Right ventricle myocardium inferior (tissue), 1 donor: ENCODE measurements at regions of chr2 and their contacts with region 1.

Region 1: DNA sequence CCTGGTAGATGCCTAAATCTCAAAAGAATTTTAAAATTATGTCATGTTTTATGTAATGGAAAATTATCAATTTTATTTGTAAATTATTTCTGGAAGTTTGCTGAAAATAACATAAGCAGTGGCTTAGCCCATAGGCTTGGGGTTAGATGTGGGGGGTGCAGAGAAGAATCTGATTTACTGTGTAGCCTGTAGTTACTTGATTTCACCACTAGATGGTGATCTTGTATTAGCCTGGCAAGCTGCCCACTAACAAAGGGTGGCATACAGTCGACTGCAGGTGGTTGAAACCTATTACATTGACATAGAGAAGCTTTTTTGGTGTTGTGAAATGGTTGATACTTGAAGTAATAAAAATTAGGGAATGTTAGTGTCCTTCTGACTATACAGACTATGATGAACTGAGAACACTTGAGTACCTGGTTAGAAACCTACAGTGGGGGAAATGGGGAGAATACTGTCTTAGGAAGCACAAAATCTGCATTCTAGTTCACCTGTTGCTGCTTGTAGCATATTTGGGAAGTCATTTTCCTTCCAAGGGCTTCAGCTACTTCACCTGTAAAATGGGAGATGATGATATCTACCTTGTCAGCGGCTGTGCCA is 191.0 kb upstream of the LHCGR start:
- DNase-seq: no peak
- ATAC-seq: peak; percentile 77

Region 2: GRCh38 chr2:48574353-48575287 is 371.9 kb before region 1 on chr2:
- intact Hi-C with region 1: no loop called
- DNase-seq: no peak
- ATAC-seq: no peak

Region 3: DNA sequence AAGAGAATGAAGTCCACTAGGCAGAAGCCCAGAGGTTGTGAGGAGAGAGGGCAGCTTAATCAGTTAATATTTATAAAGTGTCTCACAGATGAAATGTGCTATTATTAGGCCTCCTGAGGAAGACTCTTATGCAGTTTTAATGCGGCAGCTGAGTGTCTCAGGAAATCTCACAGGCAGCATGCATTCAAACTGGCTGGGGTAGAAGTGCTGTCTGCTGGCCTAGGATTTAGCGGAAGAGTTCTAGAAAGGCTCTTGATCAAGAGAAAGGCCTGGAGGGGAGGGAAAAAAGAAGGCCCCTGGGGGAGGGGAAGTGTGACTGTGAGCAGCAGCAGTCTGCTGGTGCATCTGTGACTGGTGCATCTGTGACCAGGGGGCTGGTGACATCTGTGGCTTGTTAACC is 74.7 kb after region 1 on chr2:
- intact Hi-C with region 1: loop called (anchors 5 kb)
- DNase-seq: no peak
- ATAC-seq: peak; percentile 60

Region 4: DNA sequence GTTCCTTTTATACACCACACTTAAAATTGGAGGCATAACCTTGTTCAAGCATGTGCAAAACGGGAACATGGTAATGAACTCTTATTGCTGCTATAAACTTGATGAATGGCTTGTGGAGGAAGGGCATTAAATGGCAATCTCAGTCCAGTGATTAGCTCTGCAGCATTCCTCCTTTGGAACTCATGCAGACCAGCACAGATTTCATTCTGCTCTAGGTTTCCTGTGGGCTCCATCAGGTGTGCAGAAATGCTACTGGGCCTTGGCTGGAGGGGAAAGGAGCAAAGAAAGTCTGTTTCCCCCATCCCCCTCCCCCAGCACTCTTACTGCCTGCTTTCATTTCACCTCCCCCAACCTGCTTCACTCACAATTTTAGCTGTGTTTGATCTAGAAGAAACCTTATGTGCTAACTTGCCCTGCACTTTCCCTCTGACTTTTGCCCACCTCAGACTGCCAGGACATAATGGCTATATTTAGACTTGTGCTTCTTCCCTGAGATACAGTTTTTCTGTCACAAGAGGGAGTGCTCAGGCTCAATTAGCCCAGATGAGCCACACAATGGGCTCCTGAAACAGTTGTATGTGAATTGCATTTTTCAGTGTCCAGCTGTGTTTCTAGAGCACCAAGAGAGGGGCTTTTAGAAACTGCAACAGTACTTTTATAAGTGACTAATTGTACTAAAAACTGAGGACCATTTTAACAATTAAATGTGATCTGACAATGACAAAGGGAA is 98.0 kb after region 1 on chr2:
- intact Hi-C with region 1: loop called (anchors 10 kb)
- DNase-seq: no peak
- ATAC-seq: peak; percentile 81

Region 5: DNA sequence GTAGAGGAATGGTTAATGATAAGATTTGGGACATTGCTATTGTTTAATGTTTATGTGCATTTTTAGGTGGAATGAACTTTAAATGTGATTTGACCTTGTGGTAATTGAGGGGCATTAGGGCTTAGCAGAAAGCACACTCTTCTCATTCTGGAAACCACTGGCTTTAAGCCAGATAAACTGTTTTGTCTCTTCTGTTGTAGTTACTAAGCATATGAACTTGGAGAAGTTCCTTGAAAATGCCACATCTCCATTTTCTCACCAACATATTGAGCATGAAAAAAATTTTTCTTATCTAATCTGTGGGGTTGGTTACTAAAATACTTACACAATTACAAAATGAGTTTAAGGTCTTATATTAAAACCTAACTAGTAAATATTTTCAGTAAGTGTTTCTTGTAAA is 278.6 kb after region 1 on chr2:
- intact Hi-C with region 1: loop called (anchors 10 kb)
- DNase-seq: no peak
- ATAC-seq: peak; percentile 47

Region 6: GRCh38 chr2:49332415-49332814 is 385.9 kb after region 1 on chr2:
- intact Hi-C with region 1: loop called (anchors 5 kb)
- DNase-seq: no peak
- ATAC-seq: no peak

Region 7: DNA sequence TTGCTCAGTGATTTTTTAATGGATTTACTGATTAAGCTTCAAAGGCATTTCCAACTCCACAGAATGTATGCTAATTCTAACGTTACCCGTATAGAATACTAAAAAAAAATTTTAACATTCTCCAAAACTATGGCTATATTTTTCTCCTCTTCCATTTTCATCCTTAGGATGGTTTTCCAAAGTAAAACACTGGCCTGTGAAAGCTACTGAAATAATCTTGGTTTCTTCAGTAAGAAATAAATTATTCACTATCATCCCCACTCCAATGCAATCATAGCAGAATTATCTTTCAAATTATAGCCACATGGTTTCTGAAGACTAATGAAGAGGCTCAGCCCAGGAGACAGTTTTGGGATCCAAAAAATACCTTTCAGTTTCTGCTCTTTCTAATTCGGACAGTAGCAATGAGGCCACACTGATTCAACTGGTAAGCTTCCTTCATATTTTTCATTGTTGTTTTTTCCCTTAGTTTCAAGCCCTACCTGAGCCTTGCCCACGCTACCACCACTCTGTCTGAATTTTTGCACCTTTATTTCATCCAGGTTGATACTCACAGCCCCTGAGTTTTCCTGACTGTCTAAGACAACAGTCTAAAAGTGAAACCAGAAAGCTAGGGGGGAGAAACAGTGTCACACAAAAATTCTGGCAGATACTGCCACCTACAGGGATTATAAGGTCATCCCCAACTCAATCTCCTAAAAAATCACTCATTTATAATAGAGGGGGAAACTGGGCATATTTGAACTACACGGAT is 1197.5 kb after region 1 on chr2:
- intact Hi-C with region 1: loop called (anchors 10 kb)
- DNase-seq: no peak
- ATAC-seq: peak; percentile 74